Common myeloid progenitor, CD34-positive (primary cell): ENCODE measurements at regions of chr19 and their contacts with region 1.

Region 1: DNA sequence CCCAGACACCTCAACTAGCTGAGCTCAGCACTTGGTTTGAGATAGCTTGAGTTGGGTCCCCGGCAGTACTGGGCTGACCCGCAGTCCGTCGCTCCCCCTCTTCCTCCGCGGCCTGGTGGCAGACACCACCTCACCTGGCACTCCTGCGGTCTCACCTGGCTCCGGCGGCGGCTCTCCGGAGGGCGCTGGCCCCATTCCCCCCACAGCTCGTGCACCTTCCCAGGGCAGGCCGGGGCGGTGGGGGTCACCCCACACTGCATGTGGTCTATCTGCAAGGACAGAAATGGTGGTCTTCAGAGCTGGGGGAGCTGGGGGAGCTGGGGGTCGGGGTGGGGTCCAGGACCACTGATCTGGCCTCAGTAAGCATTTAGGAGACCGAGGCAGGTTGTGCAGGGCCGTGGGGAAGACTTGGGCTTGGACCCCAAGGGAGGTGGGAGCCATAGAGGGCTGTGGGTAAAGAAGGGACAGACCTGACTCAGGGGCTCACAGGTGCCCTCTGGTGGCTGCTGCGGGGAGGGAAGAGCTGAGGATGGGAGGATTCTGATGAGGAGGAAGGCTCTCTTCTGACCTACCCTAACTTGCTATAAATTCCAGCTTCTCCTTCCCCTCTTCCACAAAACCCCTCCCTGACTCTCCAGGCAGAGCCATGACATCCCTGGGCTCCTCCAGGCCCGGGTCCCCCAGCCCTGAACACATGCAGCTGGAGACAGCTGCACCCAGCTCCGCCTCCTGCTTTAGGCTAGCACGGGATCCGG is 6.7 kb upstream of the PLIN4 start:
- DNase-seq: peak; percentile 41 to 62 (median 48)
- H3K4me3 ChIP-seq: no peak overlapping the region
- H3K27ac ChIP-seq: no peak overlapping the region
- H3K4me1 ChIP-seq: no peaks in the 10 kb centered on the region
- H3K27me3 ChIP-seq: no peaks in the 10 kb centered on the region

Region 2: GRCh38 chr19:4488496-4488895 is 36.5 kb before region 1 on chr19:
- CTCF ChIA-PET with region 1: no interaction called
- POLR2A ChIA-PET with region 1: no interaction called
- DNase-seq: no peak
- H3K4me3 ChIP-seq: no peak overlapping the region
- H3K27ac ChIP-seq: no peak overlapping the region
- H3K4me1 ChIP-seq: no peaks in the 10 kb centered on the region
- H3K27me3 ChIP-seq: no peaks in the 10 kb centered on the region

Region 3: DNA sequence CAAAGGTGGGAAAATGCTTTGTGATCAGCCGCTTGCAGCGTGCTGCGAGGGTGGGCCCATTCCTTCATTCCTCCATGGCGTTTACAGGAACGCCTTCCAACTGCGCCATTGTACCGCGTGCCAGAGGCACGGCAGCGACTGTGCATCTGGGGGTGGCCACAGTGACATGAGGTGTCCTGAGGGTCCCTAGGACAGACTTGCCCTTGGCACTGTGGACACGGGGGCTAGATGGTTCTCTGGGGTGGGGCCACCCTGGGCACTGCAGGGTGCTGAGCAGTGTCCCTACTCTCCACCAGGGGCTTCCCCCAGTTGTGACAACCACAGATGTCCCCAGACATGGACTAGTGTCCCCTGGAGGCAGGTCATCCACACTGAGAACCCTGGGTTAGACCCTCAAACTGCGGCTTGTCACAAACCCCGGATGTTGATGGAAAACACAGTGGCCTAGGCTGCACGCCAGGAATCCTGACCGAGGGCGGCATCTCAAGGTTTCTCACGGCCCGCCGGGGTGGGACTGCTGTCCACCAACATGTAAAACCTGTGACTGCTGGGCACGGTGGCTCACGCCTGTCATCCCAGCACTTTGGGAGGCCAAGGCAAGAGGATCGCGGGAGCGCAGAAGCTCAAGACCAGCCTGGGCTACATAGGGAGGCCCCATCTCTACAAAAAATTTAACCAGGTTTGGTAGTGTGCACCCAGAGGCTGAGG is 18.1 kb before region 1 on chr19:
- CTCF ChIA-PET with region 1: interaction called, 20 read pairs
- POLR2A ChIA-PET with region 1: no interaction called
- DNase-seq: no peak
- H3K4me3 ChIP-seq: no peak overlapping the region
- H3K27ac ChIP-seq: no peak overlapping the region
- H3K4me1 ChIP-seq: peaks cover 0 to 9% (median 4%) of the 10 kb centered on the region in 4 experiments
- H3K27me3 ChIP-seq: no peaks in the 10 kb centered on the region

Region 4: GRCh38 chr19:4534836-4535658 is 10.1 kb after region 1 on chr19 and contains the start of gene PLIN5:
- CTCF ChIA-PET with region 1: interaction called, 16 read pairs
- POLR2A ChIA-PET with region 1: no interaction called
- DNase-seq: peak; percentile 63 to 83 (median 81)
- H3K4me3 ChIP-seq: peak within 1 kb of the TSS in 1 of 7 experiments; percentile 45
- H3K27ac ChIP-seq: no peak within 1 kb of the TSS
- H3K4me1 ChIP-seq: peaks cover 0 to 22% (median 20%) of the 10 kb centered on the region in 4 experiments
- H3K27me3 ChIP-seq: peaks cover 0 to 22% (median 9%) of the 10 kb centered on the region in 5 experiments